ENCODE measurements at regions of chr11 and their contacts with region 1.

Region 1: GRCh38 chr11:19370100-19370861 is 129.5 kb upstream of the E2F8 start:
- DNase-seq: peak; percentile 94
- H3K4me3 ChIP-seq: peak overlapping the region in 1 of 3 experiments; percentile 28
- H3K27ac ChIP-seq: peak overlapping the region; percentile 91
- H3K4me1 ChIP-seq: peaks cover 83% of the 10 kb centered on the region
- H3K27me3 ChIP-seq: no peaks in the 10 kb centered on the region
- CTCF ChIP-seq: no peak
- POLR2A ChIP-seq: no peak

Region 2: GRCh38 chr11:19232910-19233503 is 137.3 kb before region 1 on chr11:
- CTCF ChIA-PET with region 1: no interaction called
- POLR2A ChIA-PET with region 1: no interaction called
- dilution Hi-C with region 1: no loop called
- intact Hi-C with region 1: loop called (anchors 2 kb)
- DNase-seq: peak; percentile 90
- H3K4me3 ChIP-seq: peak overlapping the region in 1 of 3 experiments; percentile 42
- H3K27ac ChIP-seq: peak overlapping the region; percentile 73
- H3K4me1 ChIP-seq: peaks cover 15% of the 10 kb centered on the region
- H3K27me3 ChIP-seq: no peaks in the 10 kb centered on the region
- CTCF ChIP-seq: no peak
- POLR2A ChIP-seq: peak; percentile 70

Region 3: GRCh38 chr11:19326499-19326898 is 43.8 kb before region 1 on chr11:
- CTCF ChIA-PET with region 1: interaction called, 21 read pairs
- POLR2A ChIA-PET with region 1: no interaction called
- dilution Hi-C with region 1: no loop called
- intact Hi-C with region 1: no loop called
- DNase-seq: peak; percentile 47
- H3K4me3 ChIP-seq: no peak overlapping the region
- H3K27ac ChIP-seq: no peak overlapping the region
- H3K4me1 ChIP-seq: no peaks in the 10 kb centered on the region
- H3K27me3 ChIP-seq: peaks cover 0 to 5% of the 10 kb centered on the region in 2 experiments
- CTCF ChIP-seq: peak; percentile 17
- POLR2A ChIP-seq: no peak

Region 4: DNA sequence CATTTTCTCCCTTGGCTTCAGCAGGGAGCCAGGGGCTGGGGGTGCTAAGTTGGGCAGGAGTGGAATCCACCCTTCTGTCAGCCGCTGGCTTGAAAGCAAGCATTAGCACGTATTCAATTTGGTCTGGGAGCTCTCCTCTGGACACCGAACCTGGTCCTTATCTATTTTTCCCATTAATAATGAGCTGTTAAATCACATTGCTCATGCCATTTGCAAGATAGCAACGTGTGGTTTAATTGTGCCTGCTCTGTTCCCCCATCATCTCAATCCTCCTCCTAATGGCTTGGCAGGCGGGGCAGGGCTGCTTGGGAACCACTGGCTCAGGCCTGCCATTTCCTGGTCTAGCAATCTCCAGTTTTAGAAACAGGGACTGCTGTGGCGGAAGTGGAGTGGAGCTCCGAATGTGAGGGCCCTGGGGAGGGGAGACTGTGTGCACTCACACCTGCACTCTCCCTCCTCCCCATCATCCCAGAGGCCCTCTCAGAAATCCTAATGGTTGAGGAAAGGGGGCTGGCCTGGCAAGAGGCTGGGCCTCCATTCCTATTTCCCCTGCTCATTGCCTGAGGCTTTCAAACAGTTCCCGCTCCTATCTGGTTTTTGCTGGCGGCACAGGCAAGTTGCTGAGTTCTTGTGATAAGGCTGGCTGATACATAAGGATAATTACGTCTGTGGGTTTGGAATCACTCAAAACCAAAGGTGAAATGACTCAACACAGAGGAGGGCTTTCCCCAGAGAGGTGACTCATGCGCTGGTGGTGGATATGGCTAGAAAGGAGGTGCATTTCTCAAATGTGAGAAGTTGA is 71.7 kb after region 1 on chr11:
- CTCF ChIA-PET with region 1: interaction called, 3 read pairs
- POLR2A ChIA-PET with region 1: no interaction called
- dilution Hi-C with region 1: no loop called
- intact Hi-C with region 1: loop called (anchors 1 kb)
- DNase-seq: peak; percentile 94
- H3K4me3 ChIP-seq: no peak overlapping the region
- H3K27ac ChIP-seq: peak overlapping the region; percentile 61
- H3K4me1 ChIP-seq: peaks cover 35% of the 10 kb centered on the region
- H3K27me3 ChIP-seq: no peaks in the 10 kb centered on the region
- CTCF ChIP-seq: no peak
- POLR2A ChIP-seq: no peak

Region 5: DNA sequence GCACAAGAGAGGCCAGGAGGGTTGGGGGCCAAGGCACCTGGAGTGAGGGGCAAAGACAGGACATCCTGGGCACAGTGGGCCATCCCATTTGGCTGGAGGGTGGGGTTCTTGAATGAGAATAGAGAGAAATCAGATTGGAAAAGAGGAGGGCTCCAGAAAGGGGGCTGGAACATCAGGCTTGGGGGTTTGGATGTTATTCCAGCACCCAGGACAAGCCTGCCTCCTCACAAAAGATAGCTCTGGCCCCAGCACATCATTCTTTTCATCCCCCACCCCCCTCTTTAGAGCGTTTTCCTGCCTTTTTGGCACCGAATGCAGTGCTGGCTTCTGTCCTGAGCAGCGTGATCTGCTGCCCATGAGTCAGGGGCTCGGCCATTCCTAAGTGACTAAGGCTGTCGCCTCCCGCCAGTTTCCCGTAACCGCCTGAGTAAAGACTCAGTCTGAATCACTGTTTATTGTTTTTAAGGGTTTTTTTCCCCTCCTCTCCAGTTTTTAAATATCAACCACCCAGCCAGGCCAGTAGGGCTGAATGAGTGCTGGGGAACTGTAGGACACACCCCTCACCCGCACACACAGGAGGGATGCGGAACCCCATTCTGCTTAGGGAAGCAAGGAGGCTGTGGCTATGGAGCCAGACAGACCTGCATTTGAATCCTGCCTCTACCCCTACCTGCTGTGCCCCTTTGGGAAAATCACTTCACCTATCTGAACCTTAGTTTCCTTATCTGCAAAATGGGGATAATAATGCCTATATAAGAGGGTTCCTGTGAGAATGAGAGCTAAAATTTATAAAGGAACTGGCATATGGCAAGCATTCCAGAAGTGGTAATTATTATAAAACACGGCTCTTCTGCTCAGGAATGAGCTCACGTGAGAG is 309.9 kb after region 1 on chr11:
- CTCF ChIA-PET with region 1: no interaction called
- POLR2A ChIA-PET with region 1: no interaction called
- dilution Hi-C with region 1: no loop called
- intact Hi-C with region 1: loop called (anchors 1 kb)
- DNase-seq: peak; percentile 98
- H3K4me3 ChIP-seq: no peak overlapping the region
- H3K27ac ChIP-seq: peak overlapping the region; percentile 99
- H3K4me1 ChIP-seq: peaks cover 49% of the 10 kb centered on the region
- H3K27me3 ChIP-seq: no peaks in the 10 kb centered on the region
- CTCF ChIP-seq: no peak
- POLR2A ChIP-seq: no peak

Region 6: DNA sequence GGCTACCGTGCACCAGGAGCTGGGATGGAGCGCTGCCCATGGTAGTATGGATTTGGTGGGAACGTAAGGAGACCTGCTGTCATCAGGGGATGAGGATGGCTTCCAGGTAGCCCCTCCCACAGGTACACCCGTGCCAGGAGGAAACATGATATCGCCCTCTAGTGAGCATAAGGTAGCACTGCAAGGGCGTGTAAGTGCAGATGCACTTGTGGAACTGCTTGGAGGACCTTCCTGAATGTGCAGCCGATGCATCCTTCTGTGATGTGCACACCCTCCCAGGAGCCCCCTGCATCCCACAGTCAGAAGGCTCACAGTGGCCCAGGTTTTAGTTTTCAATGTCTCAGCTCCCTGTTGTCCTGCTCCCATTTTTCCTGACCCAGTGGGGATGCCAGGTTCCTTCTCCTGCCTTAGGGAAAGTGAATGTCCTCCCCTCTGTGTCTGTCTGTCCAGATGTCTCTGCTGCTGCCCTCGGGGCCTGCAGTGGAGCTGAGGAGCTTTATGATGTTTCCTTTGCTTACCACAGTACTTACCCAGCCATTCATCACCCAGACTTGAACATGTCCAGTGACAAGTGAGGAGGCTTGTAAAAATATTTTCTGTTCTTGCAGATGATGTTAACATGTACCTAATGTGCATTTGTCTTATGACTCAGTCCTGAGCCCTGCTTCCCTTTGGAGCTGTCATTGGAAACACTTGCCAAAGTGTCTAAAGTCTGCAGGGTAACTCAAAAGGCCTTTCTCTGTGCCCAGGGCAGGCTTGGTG is 740.8 kb after region 1 on chr11:
- CTCF ChIA-PET with region 1: no interaction called
- POLR2A ChIA-PET with region 1: no interaction called
- dilution Hi-C with region 1: no loop called
- intact Hi-C with region 1: loop called (anchors 2 kb)
- DNase-seq: peak; percentile 61
- H3K4me3 ChIP-seq: no peak overlapping the region
- H3K27ac ChIP-seq: peak overlapping the region; percentile 88
- H3K4me1 ChIP-seq: peaks cover 38% of the 10 kb centered on the region
- H3K27me3 ChIP-seq: no peaks in the 10 kb centered on the region
- CTCF ChIP-seq: peak; percentile 83 to 89
- POLR2A ChIP-seq: no peak

Measured in endothelial cell of umbilical vein (primary cell).